ENCODE measurements at regions of chr4 and their contacts with region 1.

Region 1: GRCh38 chr4:26081795-26082498 is 167.9 kb downstream of the SMIM20 start:
- DNase-seq: peak; percentile 56
- ATAC-seq: peak; percentile 41
- H3K4me3 ChIP-seq: no peak overlapping the region
- H3K4me3 Mint-ChIP-seq: no peak overlapping the region
- H3K27ac ChIP-seq: no peak overlapping the region
- H3K27ac Mint-ChIP-seq: no peak overlapping the region
- H3K4me1 ChIP-seq: no peaks in the 10 kb centered on the region
- H3K4me1 Mint-ChIP-seq: peaks cover 8% of the 10 kb centered on the region
- H3K27me3 ChIP-seq: peaks cover 0 to 10% (median 0%) of the 10 kb centered on the region in 4 experiments
- H3K27me3 Mint-ChIP-seq: peaks cover 5% of the 10 kb centered on the region
- CTCF ChIP-seq: peak; percentile 78

Region 2: DNA sequence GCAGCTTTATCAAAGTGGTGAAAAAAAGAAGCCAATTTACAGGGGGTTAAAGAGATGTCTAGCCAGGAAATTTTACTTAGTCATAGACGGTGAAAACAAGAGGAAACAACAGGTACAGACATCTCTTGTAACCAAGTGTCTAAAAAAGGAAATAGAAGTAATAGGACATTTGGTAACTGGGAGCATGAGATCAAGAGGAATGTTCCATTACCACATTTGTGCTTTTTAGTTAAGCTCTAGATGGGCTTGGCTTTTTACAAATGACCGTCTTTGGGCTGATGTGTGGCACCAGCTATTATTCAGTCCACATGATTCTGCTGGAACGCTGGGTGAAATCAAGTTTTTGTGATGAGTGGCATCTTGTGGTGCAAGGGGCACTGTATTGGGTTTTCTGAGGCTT is 11.6 kb after region 1 on chr4:
- CTCF ChIA-PET with region 1: interaction called, 35 read pairs
- POLR2A ChIA-PET with region 1: no interaction called
- intact Hi-C with region 1: no loop called
- DNase-seq: no peak
- ATAC-seq: no peak
- H3K4me3 ChIP-seq: no peak overlapping the region
- H3K4me3 Mint-ChIP-seq: no peak overlapping the region
- H3K27ac ChIP-seq: no peak overlapping the region
- H3K27ac Mint-ChIP-seq: no peak overlapping the region
- H3K4me1 ChIP-seq: peaks cover 3 to 6% of the 10 kb centered on the region in 2 donors
- H3K4me1 Mint-ChIP-seq: peaks cover 4% of the 10 kb centered on the region
- H3K27me3 ChIP-seq: no peaks in the 10 kb centered on the region
- H3K27me3 Mint-ChIP-seq: no peaks in the 10 kb centered on the region
- CTCF ChIP-seq: no peak